ENCODE measurements at regions of chr11 and their contacts with region 1.

Region 1: DNA sequence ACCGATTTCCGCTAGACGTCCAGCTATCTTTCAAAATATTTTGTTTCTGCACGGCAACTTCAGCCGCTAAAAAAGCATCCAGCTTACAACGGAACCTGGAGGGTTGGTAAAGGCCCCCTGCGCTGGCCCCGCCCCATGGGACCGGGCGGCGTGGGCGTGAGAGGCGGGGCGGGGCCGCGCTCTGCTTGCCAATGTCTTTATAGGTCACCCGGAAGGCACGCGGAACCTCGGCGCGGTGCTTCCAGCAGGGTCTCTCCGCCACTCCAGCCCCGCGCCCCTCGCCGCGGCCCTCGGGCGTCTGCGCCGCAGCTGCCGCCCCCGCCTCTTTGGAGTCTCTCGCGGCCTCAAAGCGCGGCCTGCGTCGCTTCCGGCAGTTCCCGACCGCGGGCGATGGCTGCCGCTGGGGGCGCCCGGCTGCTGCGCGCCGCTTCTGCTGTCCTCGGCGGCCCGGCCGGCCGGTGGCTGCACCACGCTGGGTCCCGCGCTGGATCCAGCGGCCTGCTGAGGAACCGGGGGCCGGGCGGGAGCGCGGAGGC is at the start of gene FDX1:
- DNase-seq: peak; percentile 87
- ATAC-seq: peak; percentile 86
- H3K4me3 Mint-ChIP-seq: peak within 1 kb of the TSS; percentile 95
- H3K27ac Mint-ChIP-seq: peak within 1 kb of the TSS; percentile 87
- H3K4me1 Mint-ChIP-seq: peaks cover 42% of the 10 kb centered on the region
- H3K27me3 Mint-ChIP-seq: no peaks in the 10 kb centered on the region
- CTCF ChIP-seq: no peak
- total RNA-seq, gene FDX1: 8.7 and 9.4 TPM in 2 replicates

Region 2: DNA sequence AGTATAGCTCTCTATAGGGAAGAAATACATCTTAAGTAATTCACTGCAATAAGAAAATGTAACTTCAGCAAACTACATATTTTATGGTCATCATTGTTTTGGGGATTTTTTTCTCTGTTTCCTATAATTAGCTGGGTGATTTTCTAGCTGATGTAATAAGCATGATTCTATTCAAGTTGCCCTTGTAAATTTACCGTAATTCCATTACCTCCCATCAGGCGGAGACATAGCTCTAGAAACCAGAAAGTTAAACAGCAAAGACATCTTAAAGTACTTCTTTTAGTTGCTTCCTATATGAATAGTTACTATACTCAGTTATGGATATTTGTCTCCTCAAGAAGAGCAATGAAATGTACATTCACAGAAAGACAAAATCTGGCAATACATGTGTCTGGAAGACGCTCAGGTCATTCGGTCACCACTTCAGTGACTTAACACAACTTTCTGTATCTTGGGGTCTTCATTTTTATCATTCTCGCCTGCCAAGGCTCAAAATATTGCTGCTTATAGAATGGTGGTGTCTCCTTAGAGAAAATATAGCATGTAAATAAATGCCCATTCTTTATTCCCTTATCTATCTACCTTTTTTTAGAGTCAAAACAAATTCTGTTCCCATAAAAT is 576.5 kb before region 1 on chr11:
- CTCF ChIA-PET with region 1: no interaction called
- POLR2A ChIA-PET with region 1: no interaction called
- intact Hi-C with region 1: loop called (anchors 2 kb)
- DNase-seq: no peak
- ATAC-seq: peak; percentile 31
- H3K4me3 Mint-ChIP-seq: no peak overlapping the region
- H3K27ac Mint-ChIP-seq: no peak overlapping the region
- H3K4me1 Mint-ChIP-seq: no peaks in the 10 kb centered on the region
- H3K27me3 Mint-ChIP-seq: no peaks in the 10 kb centered on the region
- CTCF ChIP-seq: no peak

Region 3: GRCh38 chr11:110092515-110093404 is 337.0 kb before region 1 on chr11 and contains the start of gene ZC3H12C:
- CTCF ChIA-PET with region 1: no interaction called
- POLR2A ChIA-PET with region 1: interaction called, 4 read pairs
- intact Hi-C with region 1: loop called (anchors 5 kb)
- DNase-seq: peak; percentile 40
- ATAC-seq: peak; percentile 79
- H3K4me3 Mint-ChIP-seq: peak within 1 kb of the TSS; percentile 88
- H3K27ac Mint-ChIP-seq: peak within 1 kb of the TSS; percentile 33
- H3K4me1 Mint-ChIP-seq: peaks cover 12% of the 10 kb centered on the region
- H3K27me3 Mint-ChIP-seq: peaks cover 43% of the 10 kb centered on the region
- CTCF ChIP-seq: no peak
- total RNA-seq, gene ZC3H12C: 0.83 and 0.95 TPM in 2 replicates

Region 4: DNA sequence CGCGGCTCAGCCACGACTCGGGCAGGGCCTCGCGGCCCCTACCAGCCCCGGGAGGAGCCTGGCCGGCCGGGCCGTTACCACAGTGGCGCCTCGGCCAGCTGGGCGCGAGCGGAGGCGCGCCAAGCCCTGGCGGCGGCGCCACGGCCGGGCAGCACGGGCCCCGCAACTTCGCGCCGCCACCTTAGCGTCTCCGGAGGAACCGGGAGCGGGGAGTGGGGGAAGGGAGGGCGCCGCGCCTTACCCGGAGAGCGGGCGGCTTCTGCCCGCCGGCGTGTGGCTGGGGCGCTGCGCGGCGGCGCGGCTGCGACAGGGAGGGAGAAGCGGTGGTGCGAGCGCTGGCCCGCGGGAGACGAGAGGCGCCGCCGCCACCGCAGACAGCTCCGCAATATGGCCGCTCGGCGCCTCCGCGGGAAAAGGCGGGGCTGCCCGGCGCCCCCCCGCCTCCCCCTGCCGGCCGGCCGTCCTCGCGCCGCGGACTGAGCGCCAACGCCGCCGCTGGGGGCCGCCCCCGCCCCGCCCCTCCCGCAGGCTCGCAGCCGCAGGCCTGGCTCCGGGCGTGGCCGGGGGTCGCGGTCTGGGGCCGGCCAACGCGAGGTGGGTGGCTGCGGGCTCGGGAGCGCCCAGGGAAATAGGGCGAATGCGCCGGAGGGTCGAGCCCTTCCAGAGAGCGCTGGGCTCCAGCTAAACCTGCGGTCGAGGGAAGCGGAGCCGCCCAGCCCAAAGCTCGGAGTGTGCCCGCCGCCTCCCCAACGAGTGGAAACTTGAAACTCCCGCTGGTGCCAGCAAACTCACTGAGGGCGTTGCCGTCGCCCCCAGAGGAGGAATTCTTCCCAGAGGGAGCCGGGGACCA is 133.3 kb before region 1 on chr11 and contains the start of gene RDX:
- CTCF ChIA-PET with region 1: no interaction called
- POLR2A ChIA-PET with region 1: interaction called, 3 read pairs
- intact Hi-C with region 1: loop called (anchors 1 kb)
- DNase-seq: peak; percentile 74
- ATAC-seq: peak; percentile 83
- H3K4me3 Mint-ChIP-seq: peak within 1 kb of the TSS; percentile 87
- H3K27ac Mint-ChIP-seq: peak within 1 kb of the TSS; percentile 71
- H3K4me1 Mint-ChIP-seq: peaks cover 30% of the 10 kb centered on the region
- H3K27me3 Mint-ChIP-seq: no peaks in the 10 kb centered on the region
- CTCF ChIP-seq: no peak
- total RNA-seq, gene RDX: 27.4 and 27.9 TPM in 2 replicates

Region 5: DNA sequence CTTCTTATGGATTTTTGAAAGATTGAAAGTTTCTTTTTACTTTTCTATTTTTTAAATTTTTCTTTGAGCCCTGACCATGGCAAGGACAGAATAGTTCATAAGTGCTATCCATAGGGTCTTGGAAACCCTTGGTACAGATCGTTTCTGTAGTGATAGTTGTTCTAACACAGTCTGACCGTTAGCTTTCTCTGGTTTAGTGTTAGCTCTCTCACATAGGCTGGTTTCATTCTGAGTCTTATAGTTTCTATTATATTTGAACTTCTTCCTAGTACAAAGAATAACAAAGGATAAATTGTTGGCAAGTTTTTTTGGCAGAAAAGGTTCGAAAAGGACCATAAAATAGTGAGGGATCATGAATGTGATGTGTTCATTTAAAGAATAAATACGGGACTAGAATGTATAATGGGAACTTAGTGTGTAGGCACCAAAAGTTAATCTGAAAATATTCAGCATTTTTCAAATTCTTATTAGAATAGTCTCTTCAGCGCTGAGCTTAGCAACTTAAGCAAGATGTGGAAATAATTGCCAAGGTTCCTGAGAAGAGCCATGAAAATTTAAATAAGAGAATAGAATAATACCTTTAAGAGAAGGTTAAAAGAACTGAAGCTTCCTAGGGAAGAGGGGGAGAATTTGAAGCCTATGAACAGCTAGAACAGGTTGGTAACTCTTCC is 24.0 kb after region 1 on chr11:
- CTCF ChIA-PET with region 1: no interaction called
- POLR2A ChIA-PET with region 1: no interaction called
- intact Hi-C with region 1: no loop called
- DNase-seq: no peak
- ATAC-seq: no peak
- H3K4me3 Mint-ChIP-seq: no peak overlapping the region
- H3K27ac Mint-ChIP-seq: no peak overlapping the region
- H3K4me1 Mint-ChIP-seq: peaks cover 20% of the 10 kb centered on the region
- H3K27me3 Mint-ChIP-seq: no peaks in the 10 kb centered on the region
- CTCF ChIP-seq: no peak

Region 6: GRCh38 chr11:110606415-110606814 is 176.6 kb after region 1 on chr11:
- CTCF ChIA-PET with region 1: no interaction called
- POLR2A ChIA-PET with region 1: no interaction called
- intact Hi-C with region 1: no loop called
- DNase-seq: no peak
- ATAC-seq: no peak
- H3K4me3 Mint-ChIP-seq: no peak overlapping the region
- H3K27ac Mint-ChIP-seq: no peak overlapping the region
- H3K4me1 Mint-ChIP-seq: no peaks in the 10 kb centered on the region
- H3K27me3 Mint-ChIP-seq: peaks cover 7% of the 10 kb centered on the region
- CTCF ChIP-seq: no peak

Region 7: DNA sequence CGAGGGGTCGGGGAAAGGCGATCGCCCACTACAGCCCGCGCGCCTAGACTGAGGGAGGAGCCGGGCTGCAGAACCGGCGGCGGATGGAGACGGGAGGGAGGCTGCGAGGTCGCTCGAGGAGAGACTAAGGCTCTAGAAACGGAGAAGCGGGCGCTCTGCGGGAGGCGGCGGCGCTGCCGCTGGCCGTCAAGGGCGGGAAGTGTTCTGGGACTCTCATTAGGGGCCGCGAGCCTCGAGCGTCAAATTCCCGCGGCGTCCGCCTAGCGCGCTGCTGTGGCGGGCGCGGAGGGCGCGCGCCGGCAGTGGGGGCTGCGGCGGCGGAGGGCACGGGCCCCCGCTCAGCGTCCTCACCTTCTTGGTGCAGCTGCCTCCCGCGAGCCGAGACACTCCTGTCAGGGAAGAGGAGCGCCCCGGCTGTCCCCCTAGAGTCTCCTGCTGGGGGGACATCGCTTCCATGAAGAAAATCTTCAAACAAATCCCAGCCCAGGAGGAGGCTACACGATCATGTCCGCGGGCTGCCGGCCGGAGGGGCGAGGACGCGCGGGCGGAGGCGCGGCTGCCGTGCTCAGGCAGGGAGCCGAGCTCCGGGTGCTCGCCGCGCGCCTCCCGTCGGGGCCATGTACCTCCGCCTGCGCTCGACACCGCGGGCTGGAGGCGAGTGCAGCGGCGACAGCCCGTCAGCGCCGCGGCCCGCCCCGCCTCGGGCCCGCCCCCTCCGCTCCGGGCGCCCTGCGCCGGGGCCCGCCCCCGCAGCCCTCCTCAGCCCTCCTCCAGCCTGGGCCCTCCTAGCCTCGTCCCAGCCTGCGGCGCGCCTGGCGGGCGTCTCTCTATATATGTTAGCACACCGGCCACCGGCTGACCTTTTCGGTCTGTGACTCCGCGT is 282.2 kb after region 1 on chr11 and contains the start of gene ARHGAP20:
- CTCF ChIA-PET with region 1: no interaction called
- POLR2A ChIA-PET with region 1: no interaction called
- intact Hi-C with region 1: loop called (anchors 5 kb)
- DNase-seq: peak; percentile 71
- ATAC-seq: peak; percentile 95
- H3K4me3 Mint-ChIP-seq: peak within 1 kb of the TSS; percentile 84
- H3K27ac Mint-ChIP-seq: no peak within 1 kb of the TSS
- H3K4me1 Mint-ChIP-seq: peaks cover 21% of the 10 kb centered on the region
- H3K27me3 Mint-ChIP-seq: peaks cover 42% of the 10 kb centered on the region
- CTCF ChIP-seq: no peak
- total RNA-seq, gene ARHGAP20: 0.11 and 0.17 TPM in 2 replicates

Region 8: GRCh38 chr11:111601979-111602864 is 1172.4 kb after region 1 on chr11 and contains the start of gene SIK2:
- CTCF ChIA-PET with region 1: no interaction called
- POLR2A ChIA-PET with region 1: no interaction called
- intact Hi-C with region 1: loop called (anchors 1 kb)
- DNase-seq: peak; percentile 83
- ATAC-seq: peak; percentile 90
- H3K4me3 Mint-ChIP-seq: peak within 1 kb of the TSS; percentile 92
- H3K27ac Mint-ChIP-seq: peak within 1 kb of the TSS; percentile 92
- H3K4me1 Mint-ChIP-seq: peaks cover 27% of the 10 kb centered on the region
- H3K27me3 Mint-ChIP-seq: no peaks in the 10 kb centered on the region
- CTCF ChIP-seq: no peak
- total RNA-seq, gene SIK2: 10.0 and 10.2 TPM in 2 replicates

Region 9: GRCh38 chr11:112226062-112226830 is 1796.4 kb after region 1 on chr11 and contains the start of gene PTS:
- CTCF ChIA-PET with region 1: no interaction called
- POLR2A ChIA-PET with region 1: no interaction called
- intact Hi-C with region 1: loop called (anchors 2 kb)
- DNase-seq: peak; percentile 87
- ATAC-seq: peak; percentile 93
- H3K4me3 Mint-ChIP-seq: peak within 1 kb of the TSS; percentile 92
- H3K27ac Mint-ChIP-seq: peak within 1 kb of the TSS; percentile 96
- H3K4me1 Mint-ChIP-seq: peaks cover 13% of the 10 kb centered on the region
- H3K27me3 Mint-ChIP-seq: no peaks in the 10 kb centered on the region
- CTCF ChIP-seq: no peak
- total RNA-seq, gene PTS: 22.7 and 30.4 TPM in 2 replicates

Measured in activated B cell treated with CpG ODN at 0.5 μM for 24 hours (primary cell).